ENCODE measurements at regions of chr6 and their contacts with region 1.

Region 1: GRCh38 chr6:157314705-157315321 is 8.5 kb downstream of the TMEM242 start:
- DNase-seq: peak in 1 of 2 donors; percentile 78
- ATAC-seq: peak; percentile 82 to 98 (median 96)
- H3K4me3 ChIP-seq: no peak overlapping the region
- H3K4me3 Mint-ChIP-seq: no peak overlapping the region
- H3K27ac ChIP-seq: no peak overlapping the region
- H3K27ac Mint-ChIP-seq: no peak overlapping the region
- H3K4me1 ChIP-seq: peaks cover 2% of the 10 kb centered on the region
- H3K4me1 Mint-ChIP-seq: peaks cover 0 to 9% of the 10 kb centered on the region in 2 donors
- H3K27me3 ChIP-seq: no peaks in the 10 kb centered on the region
- H3K27me3 Mint-ChIP-seq: no peaks in the 10 kb centered on the region
- CTCF ChIP-seq: peak; percentile 84

Region 2: GRCh38 chr6:156976216-156977127 is 338.3 kb before region 1 on chr6:
- intact Hi-C with region 1: no loop called
- DNase-seq: peak in 1 of 2 donors; percentile 37
- ATAC-seq: peak in 2 of 3 donors; percentile 53 to 71
- H3K4me3 ChIP-seq: peak overlapping the region; percentile 19
- H3K4me3 Mint-ChIP-seq: peak overlapping the region; percentile 78
- H3K27ac ChIP-seq: peak overlapping the region; percentile 17
- H3K27ac Mint-ChIP-seq: peak overlapping the region; percentile 61 to 62
- H3K4me1 ChIP-seq: peaks cover 18% of the 10 kb centered on the region
- H3K4me1 Mint-ChIP-seq: peaks cover 75 to 79% of the 10 kb centered on the region in 2 donors
- H3K27me3 ChIP-seq: no peaks in the 10 kb centered on the region
- H3K27me3 Mint-ChIP-seq: no peaks in the 10 kb centered on the region
- CTCF ChIP-seq: no peak

Region 3: GRCh38 chr6:157221007-157221816 is 93.6 kb before region 1 on chr6:
- intact Hi-C with region 1: no loop called
- DNase-seq: peak; percentile 79 to 89
- ATAC-seq: peak; percentile 83 to 94 (median 91)
- H3K4me3 ChIP-seq: peak overlapping the region; percentile 40
- H3K4me3 Mint-ChIP-seq: peak overlapping the region; percentile 78
- H3K27ac ChIP-seq: no peak overlapping the region
- H3K27ac Mint-ChIP-seq: peak overlapping the region; percentile 43 to 69
- H3K4me1 ChIP-seq: peaks cover 36% of the 10 kb centered on the region
- H3K4me1 Mint-ChIP-seq: peaks cover 16 to 29% of the 10 kb centered on the region in 2 donors
- H3K27me3 ChIP-seq: peaks cover 2% of the 10 kb centered on the region
- H3K27me3 Mint-ChIP-seq: peaks cover 10 to 15% of the 10 kb centered on the region in 2 donors
- CTCF ChIP-seq: no peak

Region 4: GRCh38 chr6:157281570-157281969 is 33.2 kb before region 1 on chr6:
- intact Hi-C with region 1: no loop called
- DNase-seq: peak in 1 of 2 donors; percentile 17
- ATAC-seq: peak; percentile 46 to 68 (median 59)
- H3K4me3 ChIP-seq: no peak overlapping the region
- H3K4me3 Mint-ChIP-seq: no peak overlapping the region
- H3K27ac ChIP-seq: no peak overlapping the region
- H3K27ac Mint-ChIP-seq: no peak overlapping the region
- H3K4me1 ChIP-seq: no peaks in the 10 kb centered on the region
- H3K4me1 Mint-ChIP-seq: no peaks in the 10 kb centered on the region
- H3K27me3 ChIP-seq: no peaks in the 10 kb centered on the region
- H3K27me3 Mint-ChIP-seq: peaks cover 0 to 5% of the 10 kb centered on the region in 2 donors
- CTCF ChIP-seq: no peak

Region 5: GRCh38 chr6:157597446-157598312 is 282.9 kb after region 1 on chr6:
- intact Hi-C with region 1: loop called (anchors 1 kb)
- DNase-seq: peak; percentile 23 to 64
- ATAC-seq: peak in 2 of 3 donors; percentile 60 to 77
- H3K4me3 ChIP-seq: no peak overlapping the region
- H3K4me3 Mint-ChIP-seq: no peak overlapping the region
- H3K27ac ChIP-seq: no peak overlapping the region
- H3K27ac Mint-ChIP-seq: peak overlapping the region in 1 of 2 donors; percentile 57
- H3K4me1 ChIP-seq: peaks cover 8% of the 10 kb centered on the region
- H3K4me1 Mint-ChIP-seq: peaks cover 15 to 18% of the 10 kb centered on the region in 2 donors
- H3K27me3 ChIP-seq: no peaks in the 10 kb centered on the region
- H3K27me3 Mint-ChIP-seq: no peaks in the 10 kb centered on the region
- CTCF ChIP-seq: peak; percentile 60

Measured in natural killer cell (primary cell).